ENCODE measurements at regions of chr18 and their contacts with region 1.

Region 1: GRCh38 chr18:51029694-51030536 is at the start of gene SMAD4:
- DNase-seq: peak; percentile 96
- H3K4me3 ChIP-seq: peak within 1 kb of the TSS; percentile 84
- H3K27ac ChIP-seq: peak within 1 kb of the TSS; percentile 99
- H3K4me1 ChIP-seq: peaks cover 83% of the 10 kb centered on the region
- H3K27me3 ChIP-seq: no peaks in the 10 kb centered on the region
- CTCF ChIP-seq: no peak
- total RNA-seq, gene SMAD4: 82.9 TPM

Region 2: GRCh38 chr18:50973367-50974126 is 56.4 kb before region 1 on chr18:
- intact Hi-C with region 1: loop called (anchors 10 kb)
- DNase-seq: no peak
- H3K4me3 ChIP-seq: no peak overlapping the region
- H3K27ac ChIP-seq: no peak overlapping the region
- H3K4me1 ChIP-seq: peaks cover 32% of the 10 kb centered on the region
- H3K27me3 ChIP-seq: no peaks in the 10 kb centered on the region
- CTCF ChIP-seq: no peak

Region 3: DNA sequence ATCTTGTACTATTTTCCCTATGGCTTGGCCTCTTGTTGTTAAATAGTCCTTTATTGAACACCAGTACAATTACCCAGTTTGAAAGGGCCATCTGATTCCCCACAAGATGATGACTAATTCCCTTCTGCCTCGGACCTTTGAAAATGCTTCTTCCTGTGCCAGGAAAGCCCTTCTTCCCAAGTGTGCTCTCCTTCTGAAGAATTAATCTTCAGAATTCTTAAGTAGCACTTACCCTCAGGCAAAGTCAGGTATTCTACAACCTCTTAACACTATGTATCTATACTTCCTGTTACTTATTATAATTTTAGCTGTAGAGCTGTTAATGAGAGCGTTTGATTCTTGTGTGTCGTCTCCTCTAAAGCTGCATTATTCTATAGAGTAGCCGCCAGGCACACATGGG is 196.2 kb after region 1 on chr18:
- intact Hi-C with region 1: no loop called
- DNase-seq: no peak
- H3K4me3 ChIP-seq: no peak overlapping the region
- H3K27ac ChIP-seq: no peak overlapping the region
- H3K4me1 ChIP-seq: no peaks in the 10 kb centered on the region
- H3K27me3 ChIP-seq: no peaks in the 10 kb centered on the region
- CTCF ChIP-seq: no peak